ENCODE measurements at regions of chr11 and their contacts with region 1.

Region 1: GRCh38 chr11:84524422-84525051 is 1102.6 kb downstream of the DLG2 start:
- DNase-seq: no peak
- H3K4me3 ChIP-seq: no peak overlapping the region
- H3K27ac ChIP-seq: no peak overlapping the region
- H3K4me1 ChIP-seq: peaks cover 0 to 2% (median 0%) of the 10 kb centered on the region in 4 experiments; a peak in 2 of 7 replicates
- H3K27me3 ChIP-seq: no peaks in the 10 kb centered on the region
- CTCF ChIP-seq: peak in 2 of 3 experiments; percentile 37 to 42; a peak in 2 of 4 replicates
- EP300 ChIP-seq: no peak
- POLR2A ChIP-seq: no peak
- RAD21 ChIP-seq: peak; percentile 64 to 71

Region 2: DNA sequence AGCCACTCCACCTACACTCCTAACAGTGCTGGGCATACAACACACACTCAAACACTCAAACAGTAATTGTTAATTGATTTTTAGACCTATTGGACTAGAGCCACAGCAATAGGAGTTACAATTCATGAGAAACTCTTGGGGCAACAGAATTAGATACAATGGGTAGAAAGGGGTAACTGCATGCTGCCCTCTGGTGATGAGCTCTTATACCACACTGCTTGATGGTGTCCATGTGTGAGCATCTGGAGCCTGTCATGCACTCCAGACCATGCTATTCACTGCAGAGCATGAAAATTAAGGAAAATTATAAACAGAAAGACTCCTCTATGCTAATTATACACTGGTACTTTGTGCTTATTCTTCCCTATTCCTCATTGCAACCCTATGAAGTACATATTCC is 262.8 kb before region 1 on chr11:
- CTCF ChIA-PET with region 1: no interaction called
- POLR2A ChIA-PET with region 1: no interaction called
- DNase-seq: peak; percentile 13 to 46
- H3K4me3 ChIP-seq: no peak overlapping the region
- H3K27ac ChIP-seq: no peak overlapping the region
- H3K4me1 ChIP-seq: no peaks in the 10 kb centered on the region
- H3K27me3 ChIP-seq: no peaks in the 10 kb centered on the region
- CTCF ChIP-seq: peak; percentile 37 to 67 (median 56)
- EP300 ChIP-seq: no peak
- POLR2A ChIP-seq: no peak
- RAD21 ChIP-seq: peak; percentile 79

Region 3: GRCh38 chr11:84384731-84385130 is 139.8 kb before region 1 on chr11:
- CTCF ChIA-PET with region 1: interaction called, 74 read pairs
- POLR2A ChIA-PET with region 1: no interaction called
- DNase-seq: peak in 1 of 2 experiments; percentile 66
- H3K4me3 ChIP-seq: no peak overlapping the region
- H3K27ac ChIP-seq: no peak overlapping the region
- H3K4me1 ChIP-seq: no peaks in the 10 kb centered on the region
- H3K27me3 ChIP-seq: no peaks in the 10 kb centered on the region
- CTCF ChIP-seq: peak in 2 of 3 experiments; percentile 73 to 80; a peak in 3 of 4 replicates
- EP300 ChIP-seq: no peak
- POLR2A ChIP-seq: no peak
- RAD21 ChIP-seq: peak; percentile 69 to 77

Region 4: DNA sequence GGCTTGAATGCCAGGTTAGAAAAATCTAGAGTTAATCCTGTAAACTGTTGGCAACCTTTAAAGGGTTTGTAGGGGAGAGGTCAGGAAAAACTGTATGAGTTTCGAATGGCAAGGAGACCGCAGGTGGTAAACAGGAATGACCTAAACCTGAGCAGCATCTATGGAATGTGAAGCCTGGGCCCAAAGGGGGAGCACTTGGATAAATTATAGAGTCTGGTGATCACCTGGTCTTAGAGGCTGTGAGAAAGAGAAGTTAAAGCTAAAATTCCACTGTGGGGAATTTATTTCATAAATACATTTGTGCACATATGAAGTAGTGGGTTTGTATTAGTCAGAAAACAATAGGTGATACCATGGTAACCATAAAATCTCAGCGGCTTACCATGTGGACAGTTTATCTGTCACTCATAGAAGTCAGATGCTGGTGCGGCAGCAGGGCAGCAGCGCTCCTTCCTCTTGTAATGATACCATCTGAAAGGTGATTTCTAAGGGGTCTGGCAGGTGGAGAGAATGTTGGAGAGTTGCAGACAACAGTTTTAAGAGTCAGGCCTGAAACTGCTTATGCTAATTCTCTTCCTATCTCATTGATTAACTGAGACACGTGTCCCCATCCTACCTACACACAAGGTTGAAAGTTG is 134.0 kb before region 1 on chr11:
- CTCF ChIA-PET with region 1: interaction called, 112 read pairs
- POLR2A ChIA-PET with region 1: no interaction called
- DNase-seq: no peak
- H3K4me3 ChIP-seq: no peak overlapping the region
- H3K27ac ChIP-seq: no peak overlapping the region
- H3K4me1 ChIP-seq: peaks cover 0 to 3% (median 0%) of the 10 kb centered on the region in 4 experiments; a peak in 1 of 7 replicates
- H3K27me3 ChIP-seq: no peaks in the 10 kb centered on the region
- CTCF ChIP-seq: peak in 2 of 3 experiments; percentile 64 to 67; a peak in 3 of 4 replicates
- EP300 ChIP-seq: no peak
- POLR2A ChIP-seq: no peak
- RAD21 ChIP-seq: peak; percentile 84 to 85

Region 5: GRCh38 chr11:84437071-84437980 is 87.2 kb before region 1 on chr11:
- CTCF ChIA-PET with region 1: interaction called, 14 read pairs
- POLR2A ChIA-PET with region 1: interaction called, 3 read pairs
- DNase-seq: peak; percentile 80 to 83
- H3K4me3 ChIP-seq: peak overlapping the region; percentile 14 to 58 (median 42); a peak in 7 of 8 replicates
- H3K27ac ChIP-seq: no peak overlapping the region
- H3K4me1 ChIP-seq: peaks cover 0 to 11% (median 8%) of the 10 kb centered on the region in 4 experiments; a peak in 3 of 7 replicates
- H3K27me3 ChIP-seq: no peaks in the 10 kb centered on the region
- CTCF ChIP-seq: no peak
- EP300 ChIP-seq: 0 out of 3 replicates have a peak, but pooled peaks of 1 of the 2 experiments have one; percentile 30
- POLR2A ChIP-seq: 0 out of 3 replicates have a peak, but pooled peaks of 1 of the 2 experiments have one; percentile 38
- RAD21 ChIP-seq: peak in 1 of 2 experiments; percentile 1; a peak in 3 of 4 replicates

Region 6: DNA sequence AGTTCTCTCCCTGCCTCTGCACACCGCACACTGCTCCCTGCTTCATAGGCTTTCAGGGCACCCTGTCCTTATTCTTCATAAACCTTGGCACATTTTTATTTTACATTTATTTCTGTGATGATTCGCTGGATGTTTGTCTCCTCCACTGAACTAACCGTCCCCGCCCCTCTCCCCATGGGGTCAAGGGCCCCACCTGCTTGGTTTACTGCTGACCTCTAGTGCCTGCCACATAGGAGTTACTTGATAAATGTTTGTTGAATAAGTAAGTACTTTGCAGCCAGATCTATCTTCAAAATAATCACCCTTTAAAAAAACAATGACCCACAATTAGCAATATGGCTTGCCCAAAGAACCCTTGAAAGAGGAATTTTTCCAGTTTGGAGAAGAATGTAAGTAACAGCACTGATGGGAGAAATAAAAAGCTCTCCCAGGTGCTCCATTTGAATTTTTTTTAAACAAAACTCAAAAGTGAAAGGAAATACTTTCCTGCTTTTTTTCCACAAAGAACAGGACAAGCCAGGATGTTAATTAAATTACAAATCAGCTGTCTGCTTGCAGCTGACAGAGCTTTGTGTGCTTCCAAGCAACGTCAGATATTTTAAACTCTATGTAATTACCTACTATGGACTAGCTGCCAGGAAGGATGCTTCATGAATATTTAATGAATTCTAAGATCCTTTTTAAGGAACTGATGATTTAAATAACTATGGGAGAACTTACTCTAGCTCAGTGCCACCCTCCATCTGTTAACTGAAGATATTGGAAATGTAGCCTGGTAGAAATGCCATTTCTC is 19.0 kb after region 1 on chr11:
- CTCF ChIA-PET with region 1: interaction called, 19 read pairs
- POLR2A ChIA-PET with region 1: no interaction called
- DNase-seq: peak; percentile 43 to 88
- H3K4me3 ChIP-seq: peak overlapping the region in 2 of 4 experiments; percentile 16 to 43; a peak in 4 of 8 replicates
- H3K27ac ChIP-seq: peak overlapping the region; percentile 27
- H3K4me1 ChIP-seq: peaks cover 0 to 14% (median 8%) of the 10 kb centered on the region in 4 experiments; a peak in 4 of 7 replicates
- H3K27me3 ChIP-seq: no peaks in the 10 kb centered on the region
- CTCF ChIP-seq: peak; percentile 27 to 59 (median 47)
- EP300 ChIP-seq: no peak; a peak in 1 of 3 replicates
- POLR2A ChIP-seq: no peak
- RAD21 ChIP-seq: peak; percentile 72 to 81

Region 7: DNA sequence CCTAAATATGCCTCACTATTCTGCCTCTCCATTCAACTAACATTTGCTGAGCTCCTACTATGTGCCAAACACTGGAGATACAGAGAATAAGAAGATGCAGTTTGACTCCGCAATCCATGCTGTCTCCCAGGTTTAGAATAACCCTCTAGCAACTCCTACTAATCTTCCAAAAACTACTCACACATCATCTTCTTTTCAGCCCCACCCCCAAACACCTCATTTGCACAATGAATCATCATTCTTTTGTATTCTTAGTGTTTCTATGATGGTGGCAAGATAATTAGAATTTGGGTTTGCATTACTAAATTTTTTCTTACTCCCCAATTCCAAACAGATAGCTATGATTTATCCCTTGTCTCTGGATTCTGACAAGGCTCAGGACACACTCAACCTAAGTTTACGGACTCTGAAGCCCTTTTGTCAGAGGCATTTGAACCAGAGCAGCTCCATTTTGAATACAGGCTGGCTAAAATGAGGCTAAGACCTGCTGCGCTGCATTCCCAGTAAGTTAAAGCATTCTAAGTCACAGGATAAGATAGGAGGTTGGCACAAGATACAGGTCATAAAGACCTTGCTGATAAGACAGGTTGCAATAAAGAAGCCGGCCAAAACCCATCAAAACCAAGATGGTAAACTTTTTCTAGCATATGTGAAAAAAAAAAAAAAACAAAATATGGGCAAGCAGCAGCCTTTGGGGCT is 63.7 kb after region 1 on chr11:
- CTCF ChIA-PET with region 1: no interaction called
- POLR2A ChIA-PET with region 1: no interaction called
- DNase-seq: no peak
- H3K4me3 ChIP-seq: no peak overlapping the region
- H3K27ac ChIP-seq: no peak overlapping the region
- H3K4me1 ChIP-seq: peaks cover 0 to 3% (median 0%) of the 10 kb centered on the region in 4 experiments; a peak in 1 of 7 replicates
- H3K27me3 ChIP-seq: no peaks in the 10 kb centered on the region
- CTCF ChIP-seq: no peak
- EP300 ChIP-seq: no peak
- POLR2A ChIP-seq: no peak
- RAD21 ChIP-seq: no peak

Region 8: GRCh38 chr11:85170226-85170625 is 645.7 kb after region 1 on chr11:
- CTCF ChIA-PET with region 1: no interaction called
- POLR2A ChIA-PET with region 1: no interaction called
- DNase-seq: peak in 1 of 2 experiments; percentile 13
- H3K4me3 ChIP-seq: no peak overlapping the region
- H3K27ac ChIP-seq: peak overlapping the region; percentile 34; the same call in 1 of the 2 replicates
- H3K4me1 ChIP-seq: peaks cover 2 to 11% (median 6%) of the 10 kb centered on the region in 4 experiments; a peak in 5 of 7 replicates
- H3K27me3 ChIP-seq: no peaks in the 10 kb centered on the region
- CTCF ChIP-seq: no peak
- EP300 ChIP-seq: no peak
- POLR2A ChIP-seq: no peak
- RAD21 ChIP-seq: no peak

Measured in H1 (cell line).